Common myeloid progenitor, CD34-positive (primary cell): ENCODE measurements at regions of chr3 and their contacts with region 1.

Region 1: DNA sequence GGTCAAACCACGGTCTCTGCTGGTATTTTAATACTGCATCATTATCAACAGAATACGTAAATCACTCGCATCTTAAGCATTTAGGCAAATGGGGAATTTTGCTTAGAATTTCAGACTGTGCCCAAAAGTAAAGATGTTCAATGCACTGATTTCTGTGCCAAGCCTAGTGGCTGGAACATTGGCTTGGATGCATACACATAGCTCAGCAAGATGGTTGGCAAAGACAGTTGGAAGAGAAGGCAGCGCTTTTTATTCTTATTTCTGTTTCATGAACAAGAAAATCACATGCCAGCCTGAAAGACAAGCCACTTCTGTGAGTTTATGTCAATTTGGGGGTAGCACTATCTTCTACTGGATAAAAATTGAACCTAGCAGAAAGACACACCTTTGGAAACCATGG is 15.1 kb downstream of the MECOM start:
- DNase-seq: no peak
- H3K4me3 ChIP-seq: no peak overlapping the region
- H3K27ac ChIP-seq: no peak overlapping the region
- H3K4me1 ChIP-seq: no peaks in the 10 kb centered on the region
- H3K27me3 ChIP-seq: no peaks in the 10 kb centered on the region

Region 2: DNA sequence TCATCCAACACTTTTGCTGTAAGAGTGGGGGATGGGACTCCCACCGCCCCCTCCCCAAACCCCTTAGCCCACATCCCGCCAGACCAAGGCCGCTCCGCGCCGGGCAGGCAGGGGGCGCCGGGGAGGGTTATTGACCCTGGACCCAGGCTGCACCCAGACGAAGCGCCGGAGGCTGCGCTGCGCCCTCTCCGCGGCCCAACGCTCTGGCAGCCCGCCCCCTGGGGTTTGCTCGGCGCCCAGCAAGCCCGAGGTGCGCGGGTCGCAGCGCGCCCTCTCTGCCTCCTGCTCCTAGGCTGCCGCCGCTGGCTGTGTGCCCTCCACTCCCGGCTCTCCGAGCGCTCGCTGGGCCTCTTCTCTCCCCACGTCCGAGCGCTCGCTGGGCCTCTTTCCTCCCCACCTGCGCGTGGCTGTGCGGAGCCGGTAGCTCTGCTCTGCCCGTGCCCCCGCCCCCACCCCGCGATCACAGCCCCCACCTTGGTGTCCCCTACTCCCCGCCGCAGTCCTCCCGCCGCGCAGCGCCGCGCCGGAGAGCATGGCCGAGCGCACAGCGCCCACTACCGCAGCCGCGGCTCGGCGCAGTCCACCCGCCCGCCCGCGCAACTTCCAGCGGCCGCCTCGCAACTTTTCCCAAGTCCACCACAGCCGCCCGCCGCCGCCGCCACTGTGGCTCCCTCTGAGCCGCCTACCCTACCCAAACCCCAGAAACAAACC is 13.8 kb after region 1 on chr3:
- CTCF ChIA-PET with region 1: interaction called, 11 read pairs
- POLR2A ChIA-PET with region 1: no interaction called
- DNase-seq: peak; percentile 90 to 95 (median 92)
- H3K4me3 ChIP-seq: peak overlapping the region; percentile 50 to 92 (median 83)
- H3K27ac ChIP-seq: peak overlapping the region in 1 of 2 experiments; percentile 49
- H3K4me1 ChIP-seq: peaks cover 7 to 71% (median 45%) of the 10 kb centered on the region in 4 experiments
- H3K27me3 ChIP-seq: peaks cover 2 to 65% (median 25%) of the 10 kb centered on the region in 5 experiments

Region 3: DNA sequence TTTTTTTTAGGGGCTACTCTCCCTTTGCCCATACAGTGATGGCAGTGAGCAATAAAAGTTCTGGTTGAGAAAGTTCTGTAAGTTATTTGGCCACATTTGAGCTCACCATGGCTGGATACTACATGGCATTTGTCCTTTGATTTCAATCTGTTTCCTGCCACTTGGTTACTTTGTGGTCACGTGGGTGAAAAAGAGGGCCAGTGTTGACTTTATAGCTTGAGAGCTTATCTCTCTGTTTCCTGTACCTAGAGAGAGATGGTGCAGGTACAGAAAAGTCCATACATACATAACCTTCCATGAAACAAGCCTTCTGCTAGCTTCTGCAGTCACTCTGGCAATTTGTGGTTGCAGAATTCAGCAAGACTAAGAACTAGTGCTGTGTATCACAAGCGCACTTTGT is 38.4 kb after region 1 on chr3:
- CTCF ChIA-PET with region 1: no interaction called
- POLR2A ChIA-PET with region 1: no interaction called
- DNase-seq: peak in 2 of 3 donors; percentile 36 to 61
- H3K4me3 ChIP-seq: no peak overlapping the region
- H3K27ac ChIP-seq: no peak overlapping the region
- H3K4me1 ChIP-seq: peaks cover 0 to 5% (median 0%) of the 10 kb centered on the region in 4 experiments
- H3K27me3 ChIP-seq: no peaks in the 10 kb centered on the region